ENCODE measurements at regions of chr9 and their contacts with region 1.

Region 1: GRCh38 chr9:109119439-109120203 is at the start of gene TMEM245:
- H3K4me3 Mint-ChIP-seq: peak within 1 kb of the TSS; percentile 97
- H3K27ac Mint-ChIP-seq: peak within 1 kb of the TSS; percentile 87
- H3K4me1 Mint-ChIP-seq: peaks cover 49% of the 10 kb centered on the region
- H3K27me3 Mint-ChIP-seq: no peaks in the 10 kb centered on the region

Region 2: GRCh38 chr9:108834959-108835696 is 284.5 kb before region 1 on chr9:
- intact Hi-C with region 1: no loop called
- H3K4me3 Mint-ChIP-seq: no peak overlapping the region
- H3K27ac Mint-ChIP-seq: no peak overlapping the region
- H3K4me1 Mint-ChIP-seq: peaks cover 32% of the 10 kb centered on the region
- H3K27me3 Mint-ChIP-seq: no peaks in the 10 kb centered on the region

Region 3: GRCh38 chr9:108933718-108934322 is 185.8 kb before region 1 on chr9 and contains the start of gene ELP1:
- intact Hi-C with region 1: loop called (anchors 1 kb)
- H3K4me3 Mint-ChIP-seq: peak within 1 kb of the TSS; percentile 98
- H3K27ac Mint-ChIP-seq: peak within 1 kb of the TSS; percentile 96
- H3K4me1 Mint-ChIP-seq: peaks cover 23% of the 10 kb centered on the region
- H3K27me3 Mint-ChIP-seq: no peaks in the 10 kb centered on the region

Region 4: GRCh38 chr9:109012876-109013678 is 106.5 kb before region 1 on chr9 and contains the start of gene CTNNAL1:
- intact Hi-C with region 1: loop called (anchors 5 kb)
- H3K4me3 Mint-ChIP-seq: peak within 1 kb of the TSS; percentile 97
- H3K27ac Mint-ChIP-seq: peak within 1 kb of the TSS; percentile 93
- H3K4me1 Mint-ChIP-seq: peaks cover 50% of the 10 kb centered on the region
- H3K27me3 Mint-ChIP-seq: no peaks in the 10 kb centered on the region

Region 5: DNA sequence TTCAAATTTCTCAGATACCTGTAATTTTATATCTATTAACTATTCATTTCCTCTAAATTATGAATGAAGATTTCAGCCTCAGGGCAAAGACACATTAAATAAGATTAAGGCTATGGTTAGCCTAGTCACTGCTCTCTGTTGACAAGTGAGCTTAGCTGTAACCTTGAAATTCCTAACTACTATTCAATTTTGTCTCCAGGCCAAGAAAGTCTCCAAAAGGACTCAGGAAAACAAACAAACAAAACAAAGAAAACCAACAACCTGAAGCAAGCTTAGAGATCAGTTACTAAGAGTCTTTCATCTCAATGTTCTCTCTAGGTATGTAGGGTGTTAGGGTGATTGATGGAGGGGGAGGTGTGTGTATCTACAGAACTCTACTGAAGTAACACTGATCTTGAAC is 96.7 kb before region 1 on chr9:
- intact Hi-C with region 1: loop called (anchors 5 kb)
- H3K4me3 Mint-ChIP-seq: no peak overlapping the region
- H3K27ac Mint-ChIP-seq: no peak overlapping the region
- H3K4me1 Mint-ChIP-seq: peaks cover 50% of the 10 kb centered on the region
- H3K27me3 Mint-ChIP-seq: no peaks in the 10 kb centered on the region

Region 6: DNA sequence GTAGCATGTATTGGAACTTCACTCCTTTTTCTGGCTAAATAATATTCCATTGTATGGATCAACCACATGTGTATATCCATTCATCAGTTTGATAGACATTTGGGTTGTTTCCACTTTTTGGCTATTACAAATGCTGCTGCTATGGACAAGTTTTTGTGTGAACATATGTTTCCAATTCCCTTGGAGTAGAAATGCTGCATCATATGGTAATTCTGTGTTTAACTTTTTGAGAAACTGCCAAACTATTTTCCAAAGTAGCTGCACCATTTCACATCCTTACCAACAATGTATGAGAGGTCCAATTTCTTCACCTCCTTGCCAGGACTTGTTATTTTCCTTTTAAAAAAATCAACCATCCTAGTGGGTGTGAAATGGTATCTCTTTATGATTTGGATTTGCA is 39.0 kb after region 1 on chr9:
- intact Hi-C with region 1: no loop called
- H3K4me3 Mint-ChIP-seq: no peak overlapping the region
- H3K27ac Mint-ChIP-seq: no peak overlapping the region
- H3K4me1 Mint-ChIP-seq: peaks cover 5% of the 10 kb centered on the region
- H3K27me3 Mint-ChIP-seq: peaks cover 52% of the 10 kb centered on the region